ENCODE measurements at regions of chr17 and their contacts with region 1.

Region 1: DNA sequence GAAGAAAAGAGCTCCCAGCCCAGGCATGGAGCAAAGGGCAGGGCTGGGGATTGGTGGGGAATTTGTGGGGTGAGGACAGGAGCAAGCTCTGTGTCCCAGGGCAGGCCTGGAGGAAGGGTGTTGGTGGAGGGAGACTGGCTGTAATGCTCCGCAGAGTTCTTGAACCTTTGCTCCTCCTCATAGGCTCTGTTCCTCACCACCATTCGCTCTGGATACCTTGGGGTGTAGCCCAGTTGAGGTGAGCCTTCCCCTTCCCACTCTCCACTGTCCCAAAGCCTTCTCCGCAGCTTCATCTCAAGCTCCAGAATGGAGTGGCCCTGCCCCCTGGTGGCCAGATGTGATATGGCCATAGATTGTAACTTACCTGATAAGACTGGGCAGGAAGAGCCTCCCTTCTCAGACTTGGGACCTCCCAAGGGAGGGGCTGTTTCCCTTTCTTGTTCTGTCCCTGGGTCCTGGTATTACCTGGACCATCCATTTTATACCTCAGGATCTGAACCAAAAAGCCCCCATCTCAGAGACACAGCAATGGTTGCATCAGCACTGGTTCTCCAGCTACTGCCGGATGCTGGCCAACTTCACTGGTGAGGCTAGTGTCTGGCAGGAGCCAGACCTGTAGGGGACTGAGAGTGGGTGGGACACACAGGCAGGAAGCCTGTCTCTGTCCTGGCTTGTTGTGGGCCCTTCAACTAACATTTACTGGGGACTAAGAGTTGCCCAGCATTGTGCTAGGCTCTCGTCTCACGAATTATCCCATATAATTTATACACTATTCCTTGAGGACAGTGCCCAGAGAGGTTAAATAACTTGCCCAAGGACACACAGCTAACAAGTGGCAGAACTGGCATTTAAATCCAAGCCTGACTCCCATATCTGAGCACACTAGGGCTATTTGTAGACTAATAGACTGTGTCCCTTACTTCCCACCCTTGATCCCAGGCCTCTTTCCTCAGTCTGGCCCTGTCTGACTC is 19.1 kb upstream of the STAC2 start:
- DNase-seq: peak; percentile 96
- H3K4me3 Mint-ChIP-seq: no peak overlapping the region
- H3K27ac Mint-ChIP-seq: no peak overlapping the region
- H3K4me1 Mint-ChIP-seq: peaks cover 8% of the 10 kb centered on the region
- H3K27me3 Mint-ChIP-seq: no peaks in the 10 kb centered on the region

Region 2: DNA sequence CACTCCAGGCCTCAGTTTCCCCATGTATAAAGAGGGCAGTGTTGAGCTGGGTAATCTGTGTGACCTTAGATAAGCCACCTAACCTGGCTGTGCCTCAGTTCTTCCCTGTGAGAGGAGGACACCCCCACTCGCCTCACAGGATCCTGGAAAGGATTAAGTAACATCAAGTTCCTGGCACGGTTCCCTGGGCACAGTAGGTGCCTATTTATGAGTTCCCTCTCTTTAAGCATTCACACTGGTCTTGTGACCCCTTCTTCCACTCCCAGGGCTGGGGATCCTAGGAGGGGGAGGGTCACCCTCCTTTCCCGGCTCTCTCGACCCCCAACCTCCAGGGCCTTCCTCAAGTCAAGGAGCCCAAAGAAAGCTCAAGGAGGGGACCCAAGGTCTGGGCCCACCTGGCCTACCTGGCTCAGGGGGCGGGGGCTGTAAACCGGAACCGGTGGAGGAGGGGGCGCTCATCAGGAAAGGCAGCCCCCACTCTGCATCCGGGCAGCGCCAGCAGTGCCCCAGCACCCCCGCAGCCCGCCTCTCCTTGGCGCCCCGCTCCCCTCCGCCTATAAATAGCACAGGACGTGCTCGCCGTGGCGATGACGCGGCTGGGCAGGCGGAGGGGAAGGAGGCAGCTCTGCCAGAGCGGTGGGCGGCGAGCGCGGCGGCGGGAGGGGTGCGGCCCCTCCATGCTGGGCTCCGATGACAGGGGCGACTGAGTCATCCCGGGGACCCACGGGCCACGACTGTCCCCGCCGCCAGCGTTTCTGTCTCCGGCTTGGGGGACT is 35.4 kb before region 1 on chr17:
- CTCF ChIA-PET with region 1: interaction called, 502 read pairs
- intact Hi-C with region 1: loop called (anchors 1 kb)
- DNase-seq: peak; percentile 79
- H3K4me3 Mint-ChIP-seq: peak overlapping the region; percentile 24
- H3K27ac Mint-ChIP-seq: no peak overlapping the region
- H3K4me1 Mint-ChIP-seq: peaks cover 31% of the 10 kb centered on the region
- H3K27me3 Mint-ChIP-seq: no peaks in the 10 kb centered on the region

Region 3: DNA sequence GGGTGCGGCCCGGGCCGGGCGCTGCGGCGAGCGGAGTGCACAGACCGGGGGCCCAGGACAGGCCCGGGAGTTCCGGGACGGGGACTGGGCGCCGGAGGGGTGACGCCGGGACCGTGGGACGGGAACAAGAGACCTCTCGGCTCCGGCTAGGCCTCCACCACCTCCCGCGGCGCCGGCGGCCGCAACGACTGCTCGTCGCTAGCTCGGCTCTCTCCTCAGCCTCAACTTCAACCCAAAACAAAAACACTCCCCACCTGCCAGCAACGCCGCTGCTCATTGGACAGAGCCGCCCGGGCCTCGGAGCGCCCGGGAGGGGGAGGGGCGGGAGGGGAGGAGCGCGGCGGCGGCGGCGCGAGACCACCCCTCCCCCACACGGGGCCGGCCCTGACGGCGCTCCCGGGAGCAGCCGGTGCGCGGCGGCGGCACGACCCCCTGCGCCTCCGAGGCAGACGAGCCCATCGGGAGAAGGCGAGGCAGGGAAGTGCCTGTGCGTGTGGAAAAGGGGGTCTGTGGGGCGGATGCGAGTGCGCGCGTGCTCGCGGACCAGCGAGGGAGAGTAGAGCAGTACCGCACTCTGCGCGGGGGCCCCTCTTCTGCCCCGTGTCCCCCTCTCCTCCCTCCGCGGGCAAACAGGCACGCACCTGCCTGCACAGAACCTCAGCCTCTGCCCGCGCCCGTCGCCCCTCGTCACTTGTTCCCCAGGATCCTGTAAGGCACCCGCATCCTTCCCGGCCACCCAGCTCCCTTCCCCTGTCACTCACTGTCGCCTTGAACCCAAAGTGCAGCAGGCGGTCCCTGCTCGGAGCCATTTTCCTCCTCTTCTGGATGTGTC is 156.7 kb after region 1 on chr17 and contains the start of gene FBXL20:
- CTCF ChIA-PET with region 1: no interaction called
- intact Hi-C with region 1: no loop called
- DNase-seq: peak; percentile 96
- H3K4me3 Mint-ChIP-seq: peak within 1 kb of the TSS; percentile 91
- H3K27ac Mint-ChIP-seq: peak within 1 kb of the TSS; percentile 90
- H3K4me1 Mint-ChIP-seq: peaks cover 61% of the 10 kb centered on the region
- H3K27me3 Mint-ChIP-seq: no peaks in the 10 kb centered on the region
- total RNA-seq, gene FBXL20: 14.2 to 15.4 TPM